ENCODE measurements at regions of chr13 and their contacts with region 1.

Region 1: DNA sequence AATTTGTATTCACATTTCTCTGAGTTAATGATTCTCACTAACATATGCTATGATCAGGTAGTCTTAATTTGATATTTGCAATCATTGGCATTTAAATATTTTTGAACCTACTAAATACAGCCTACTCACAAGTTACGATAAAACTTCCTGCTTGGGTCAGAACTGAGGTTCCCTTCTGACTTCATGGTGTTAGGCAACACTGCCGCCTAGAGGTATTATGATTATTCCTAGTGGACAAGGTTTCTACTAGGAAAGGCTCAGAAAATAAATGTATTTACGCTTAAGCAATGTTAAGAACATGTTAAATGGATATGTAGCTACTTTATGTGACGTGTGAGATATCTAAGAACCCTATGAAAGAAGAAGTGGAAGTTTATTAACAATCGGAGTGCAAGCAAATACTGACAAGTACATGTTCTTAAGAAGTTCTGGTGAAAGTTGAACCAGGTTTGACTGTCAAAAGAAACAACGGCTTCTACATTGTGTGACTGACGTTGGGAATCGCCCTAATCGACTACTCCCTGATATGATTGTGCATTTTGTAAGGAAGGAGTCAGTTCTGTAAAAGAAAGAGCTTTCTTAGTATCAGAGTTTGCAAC is 1395.8 kb downstream of the SLITRK5 start:
- DNase-seq: peak in 3 of 9 donors; percentile 1 to 52 (median 1)
- ATAC-seq: peak; percentile 57
- H3K4me3 ChIP-seq: no peak overlapping the region
- H3K4me3 Mint-ChIP-seq: no peak overlapping the region
- H3K27ac ChIP-seq: no peak overlapping the region
- H3K27ac Mint-ChIP-seq: no peak overlapping the region
- H3K4me1 ChIP-seq: no peaks in the 10 kb centered on the region
- H3K4me1 Mint-ChIP-seq: no peaks in the 10 kb centered on the region
- H3K27me3 ChIP-seq: no peaks in the 10 kb centered on the region
- H3K27me3 Mint-ChIP-seq: no peaks in the 10 kb centered on the region

Region 2: DNA sequence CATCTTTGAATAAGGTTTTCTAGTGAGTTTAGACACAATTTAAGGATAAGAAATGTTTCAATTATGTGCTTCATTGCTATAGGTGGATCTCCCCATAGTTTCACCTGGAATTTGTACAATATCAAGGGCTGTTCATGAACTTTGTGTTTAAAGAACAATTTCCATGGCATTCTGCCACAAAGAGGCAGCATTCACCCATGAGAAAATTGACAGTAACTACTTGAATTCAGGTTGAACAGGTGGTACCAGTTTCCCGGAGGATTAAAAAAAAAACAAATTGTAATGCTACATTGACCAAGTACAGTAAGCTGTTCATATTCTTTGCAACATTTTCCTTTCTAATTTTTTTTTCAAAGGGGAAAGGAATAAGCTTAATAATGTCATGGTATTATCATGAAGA is 1386.7 kb before region 1 on chr13:
- CTCF ChIA-PET with region 1: no interaction called
- POLR2A ChIA-PET with region 1: no interaction called
- intact Hi-C with region 1: loop called in 1 of 2 experiments (anchors 5 kb)
- DNase-seq: no peak
- ATAC-seq: no peak
- H3K4me3 ChIP-seq: no peak overlapping the region
- H3K4me3 Mint-ChIP-seq: no peak overlapping the region
- H3K27ac ChIP-seq: no peak overlapping the region
- H3K27ac Mint-ChIP-seq: no peak overlapping the region
- H3K4me1 ChIP-seq: no peaks in the 10 kb centered on the region
- H3K4me1 Mint-ChIP-seq: peaks cover 0 to 18% (median 8%) of the 10 kb centered on the region in 7 donors
- H3K27me3 ChIP-seq: peaks cover 0 to 20% of the 10 kb centered on the region in 2 donors
- H3K27me3 Mint-ChIP-seq: peaks cover 17 to 44% (median 36%) of the 10 kb centered on the region in 5 donors

Region 3: DNA sequence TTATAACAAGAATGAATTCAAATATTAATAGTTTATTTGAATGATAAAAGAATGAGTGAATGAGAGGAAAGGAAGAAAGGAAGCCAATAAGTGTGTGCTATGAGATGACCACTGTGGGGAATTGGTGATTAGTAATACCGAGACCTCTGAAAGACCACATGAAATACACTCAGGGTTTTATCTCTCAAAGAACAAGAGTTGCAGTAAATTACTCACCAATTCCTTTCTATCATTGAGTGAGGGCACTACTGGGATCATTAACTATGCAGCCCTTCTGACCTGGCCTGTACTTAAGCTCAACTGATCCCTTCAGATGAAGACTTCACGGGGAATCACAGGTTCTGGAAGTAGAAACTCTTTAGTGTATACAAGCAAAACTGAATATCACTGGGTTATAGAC is 240.3 kb after region 1 on chr13:
- CTCF ChIA-PET with region 1: no interaction called
- POLR2A ChIA-PET with region 1: no interaction called
- intact Hi-C with region 1: no loop called
- DNase-seq: no peak
- ATAC-seq: no peak
- H3K4me3 ChIP-seq: no peak overlapping the region
- H3K4me3 Mint-ChIP-seq: no peak overlapping the region
- H3K27ac ChIP-seq: no peak overlapping the region
- H3K27ac Mint-ChIP-seq: no peak overlapping the region
- H3K4me1 ChIP-seq: no peaks in the 10 kb centered on the region
- H3K4me1 Mint-ChIP-seq: no peaks in the 10 kb centered on the region
- H3K27me3 ChIP-seq: no peaks in the 10 kb centered on the region
- H3K27me3 Mint-ChIP-seq: no peaks in the 10 kb centered on the region

Measured in naive thymus-derived CD4-positive, alpha-beta T cell (primary cell).